ENCODE measurements at regions of chr13 and their contacts with region 1.

Region 1: GRCh38 chr13:108895220-108895704 is 265.9 kb downstream of the MYO16 start:
- DNase-seq: no peak
- H3K4me3 ChIP-seq: no peak overlapping the region
- H3K27ac ChIP-seq: no peak overlapping the region
- H3K27me3 ChIP-seq: peaks cover 0 to 15% (median 0%) of the 10 kb centered on the region in 45 donors
- CTCF ChIP-seq: peak; percentile 42 to 84 (median 70)

Region 2: GRCh38 chr13:108322206-108322824 is 572.9 kb before region 1 on chr13:
- intact Hi-C with region 1: loop called in 1 of 2 experiments (anchors 5 kb)
- DNase-seq: no peak
- H3K4me3 ChIP-seq: no peak overlapping the region
- H3K27ac ChIP-seq: no peak overlapping the region
- H3K27me3 ChIP-seq: peaks cover 0 to 10% (median 0%) of the 10 kb centered on the region in 45 donors
- CTCF ChIP-seq: peak; percentile 58 to 92 (median 78)

Region 3: GRCh38 chr13:108342369-108343289 is 552.6 kb before region 1 on chr13:
- intact Hi-C with region 1: loop called in 1 of 2 experiments (anchors 10 kb)
- DNase-seq: peak in 1 of 10 donors; percentile 16
- H3K4me3 ChIP-seq: no peak overlapping the region
- H3K27ac ChIP-seq: peak overlapping the region in 1 of 59 donors; percentile 5
- H3K27me3 ChIP-seq: peaks cover 0 to 10% (median 0%) of the 10 kb centered on the region in 45 donors
- CTCF ChIP-seq: peak; percentile 22 to 79 (median 62)

Region 4: GRCh38 chr13:108957369-108958012 is 62.2 kb after region 1 on chr13:
- intact Hi-C with region 1: no loop called
- DNase-seq: no peak
- H3K4me3 ChIP-seq: no peak overlapping the region
- H3K27ac ChIP-seq: no peak overlapping the region
- H3K27me3 ChIP-seq: peaks cover 0 to 4% (median 0%) of the 10 kb centered on the region in 45 donors
- CTCF ChIP-seq: no peak

Measured in dorsolateral prefrontal cortex (tissue), 120 donors.